ENCODE measurements at regions of chr2 and their contacts with region 1.

Region 1: GRCh38 chr2:85772019-85772745 is 18.4 kb downstream of the ATOH8 start:
- DNase-seq: peak; percentile 93 to 99
- H3K4me3 ChIP-seq: peak overlapping the region in 1 of 2 donors; percentile 50
- H3K27ac ChIP-seq: peak overlapping the region; percentile 85 to 93
- H3K4me1 ChIP-seq: peaks cover 64 to 93% of the 10 kb centered on the region in 2 donors
- H3K27me3 ChIP-seq: no peaks in the 10 kb centered on the region
- CTCF ChIP-seq: peak in 1 of 3 experiments; percentile 8

Region 2: GRCh38 chr2:85728883-85729824 is 43.0 kb before region 1 on chr2:
- intact Hi-C with region 1: loop called (anchors 1 kb)
- DNase-seq: peak in 1 of 2 donors; percentile 95
- H3K4me3 ChIP-seq: no peak overlapping the region
- H3K27ac ChIP-seq: peak overlapping the region in 1 of 2 donors; percentile 37
- H3K4me1 ChIP-seq: peaks cover 0 to 11% of the 10 kb centered on the region in 2 donors
- H3K27me3 ChIP-seq: no peaks in the 10 kb centered on the region
- CTCF ChIP-seq: peak; percentile 95 to 99 (median 97)

Region 3: GRCh38 chr2:85750587-85751575 is 21.3 kb before region 1 on chr2:
- intact Hi-C with region 1: loop called (anchors 1 kb)
- DNase-seq: peak in 1 of 2 donors; percentile 89
- H3K4me3 ChIP-seq: peak overlapping the region in 1 of 2 donors; percentile 19
- H3K27ac ChIP-seq: peak overlapping the region; percentile 97 to 98
- H3K4me1 ChIP-seq: peaks cover 11 to 46% of the 10 kb centered on the region in 2 donors
- H3K27me3 ChIP-seq: no peaks in the 10 kb centered on the region
- CTCF ChIP-seq: peak; percentile 79 to 90 (median 84)

Region 4: DNA sequence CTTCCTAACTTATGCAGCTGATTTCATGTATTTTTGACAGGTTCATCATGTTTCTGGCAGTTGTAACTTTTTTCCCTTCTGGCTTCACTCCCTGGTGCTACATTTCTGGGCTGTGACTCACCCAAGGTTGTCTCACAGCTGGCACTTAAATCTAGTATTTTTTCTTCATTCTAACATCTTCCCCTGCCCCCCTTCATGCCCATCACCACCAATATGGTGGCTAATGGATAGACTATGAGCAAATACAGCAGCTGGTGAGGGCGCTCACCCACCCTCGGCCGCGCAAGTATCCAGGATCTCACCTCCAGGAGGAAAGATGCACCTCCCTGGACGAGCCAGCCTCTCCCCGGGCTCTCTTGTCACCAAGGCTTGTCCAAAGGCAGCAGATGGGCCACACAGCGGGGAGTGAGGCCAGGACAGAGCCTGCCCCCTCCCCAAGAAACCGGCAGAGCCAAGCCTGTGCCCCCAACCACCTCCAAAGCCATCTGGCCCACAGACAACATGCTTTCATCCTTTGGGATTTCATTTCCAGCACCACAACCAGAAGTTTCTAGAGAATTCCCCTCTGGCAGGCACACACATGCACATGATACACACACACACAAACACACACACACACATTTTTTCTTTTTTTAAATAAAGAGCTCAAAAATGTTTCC is 20.7 kb after region 1 on chr2:
- intact Hi-C with region 1: loop called (anchors 1 kb)
- DNase-seq: peak in 1 of 2 donors; percentile 86
- H3K4me3 ChIP-seq: no peak overlapping the region
- H3K27ac ChIP-seq: peak overlapping the region; percentile 87 to 91
- H3K4me1 ChIP-seq: peaks cover 44 to 80% of the 10 kb centered on the region in 2 donors
- H3K27me3 ChIP-seq: no peaks in the 10 kb centered on the region
- CTCF ChIP-seq: no peak

Region 5: DNA sequence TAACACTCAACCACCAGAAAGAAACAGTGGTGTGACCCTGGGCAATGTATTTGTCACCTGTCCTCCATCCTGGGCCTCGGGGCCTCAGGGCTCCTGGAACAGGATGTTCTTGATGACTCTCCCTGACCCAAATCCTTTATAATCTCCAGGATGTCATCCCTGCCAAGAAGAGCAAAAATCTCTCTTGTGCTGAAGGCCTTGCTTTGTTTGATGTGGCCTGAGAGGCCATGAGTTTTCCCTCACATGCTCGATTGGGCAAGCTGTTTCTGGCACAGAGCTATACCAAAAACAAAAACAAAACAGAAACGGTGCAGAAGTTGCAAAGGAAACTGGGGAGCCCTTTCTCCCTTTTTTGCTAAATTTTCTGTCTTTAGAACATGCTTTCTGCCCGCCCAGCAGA is 152.3 kb after region 1 on chr2:
- intact Hi-C with region 1: no loop called
- DNase-seq: no peak
- H3K4me3 ChIP-seq: no peak overlapping the region
- H3K27ac ChIP-seq: peak overlapping the region in 1 of 2 donors; percentile 23
- H3K4me1 ChIP-seq: peaks cover 0 to 2% of the 10 kb centered on the region in 2 donors
- H3K27me3 ChIP-seq: no peaks in the 10 kb centered on the region
- CTCF ChIP-seq: no peak